WTC11 (cell line): ENCODE measurements at regions of chr3 and their contacts with region 1.

Region 1: DNA sequence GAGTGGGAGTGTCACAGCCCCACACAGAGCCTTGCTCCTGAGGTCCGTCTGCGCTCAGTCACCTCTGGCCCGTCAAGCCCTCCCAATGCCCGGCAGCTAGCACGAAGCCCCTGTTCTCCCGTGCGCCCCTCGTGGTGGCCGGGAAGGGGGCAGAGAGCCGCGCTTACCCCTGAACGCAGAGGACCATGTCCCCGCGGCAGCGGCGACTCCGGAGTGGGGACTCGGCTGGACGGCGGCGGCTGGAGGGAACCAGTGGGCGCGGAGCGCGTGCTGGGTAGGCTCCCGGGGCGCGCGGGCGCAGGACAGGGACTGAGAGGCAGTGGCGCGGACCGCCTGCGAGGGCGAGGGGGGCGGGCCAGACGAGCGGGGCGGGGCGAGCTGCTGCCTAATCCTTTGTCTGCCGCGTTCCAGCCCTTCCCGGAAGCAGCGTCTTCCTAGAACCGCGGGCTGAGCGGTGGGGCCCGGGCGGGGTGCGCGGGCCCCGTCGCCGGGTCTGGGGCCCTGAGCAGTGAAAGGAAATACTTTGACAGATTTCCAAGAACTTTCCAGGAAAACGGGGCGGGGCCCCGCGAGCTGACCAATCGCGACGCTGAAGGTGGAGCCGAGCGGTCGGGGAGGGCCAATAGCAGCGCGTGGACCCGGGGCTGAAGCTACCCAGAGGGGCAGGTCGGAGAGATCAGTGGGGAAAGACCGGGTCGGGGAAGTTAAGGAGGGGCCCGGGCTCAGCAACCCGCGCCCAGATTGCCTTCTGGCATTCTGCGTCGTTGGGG is at the start of gene CISH:
- DNase-seq: peak; percentile 94
- ATAC-seq: peak; percentile 81
- H3K4me3 Mint-ChIP-seq: peak within 1 kb of the TSS; percentile 76
- H3K27ac Mint-ChIP-seq: no peak within 1 kb of the TSS
- H3K4me1 Mint-ChIP-seq: peaks cover 24% of the 10 kb centered on the region
- H3K27me3 Mint-ChIP-seq: peaks cover 51% of the 10 kb centered on the region
- CTCF ChIP-seq: peak; percentile 46; the same call in 1 of the 2 replicates
- total RNA-seq, gene CISH: 1.8 to 2.4 TPM (median 1.9 TPM) in 3 replicates

Region 2: GRCh38 chr3:50423543-50423942 is 188.1 kb before region 1 on chr3:
- CTCF ChIA-PET with region 1: no interaction called
- POLR2A ChIA-PET with region 1: no interaction called
- DNase-seq: no peak
- ATAC-seq: no peak
- H3K4me3 Mint-ChIP-seq: no peak overlapping the region
- H3K27ac Mint-ChIP-seq: no peak overlapping the region
- H3K4me1 Mint-ChIP-seq: peaks cover 5% of the 10 kb centered on the region
- H3K27me3 Mint-ChIP-seq: no peaks in the 10 kb centered on the region
- CTCF ChIP-seq: no peak

Region 3: DNA sequence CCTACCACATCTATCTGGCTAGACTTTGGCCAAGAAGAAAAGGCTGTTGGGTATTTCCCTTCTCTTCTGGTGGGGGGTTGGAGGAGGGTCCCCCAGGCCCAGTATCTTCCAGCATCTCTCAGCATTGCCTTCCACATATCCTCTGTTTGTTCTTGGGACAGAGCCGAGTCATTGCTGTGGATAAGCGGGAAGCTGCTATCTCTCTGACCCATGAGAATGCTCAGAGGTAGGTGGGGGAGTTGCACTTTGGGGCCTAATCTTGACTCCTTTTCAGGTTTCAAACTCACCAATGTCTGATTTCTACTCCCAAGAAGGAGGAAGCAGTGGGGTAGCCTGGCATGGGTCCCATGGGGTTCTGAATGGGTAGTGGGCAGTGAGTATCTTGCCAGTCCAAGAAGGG is 34.3 kb before region 1 on chr3:
- CTCF ChIA-PET with region 1: interaction called, 98 read pairs
- POLR2A ChIA-PET with region 1: no interaction called
- DNase-seq: no peak
- ATAC-seq: no peak
- H3K4me3 Mint-ChIP-seq: no peak overlapping the region
- H3K27ac Mint-ChIP-seq: no peak overlapping the region
- H3K4me1 Mint-ChIP-seq: no peaks in the 10 kb centered on the region
- H3K27me3 Mint-ChIP-seq: no peaks in the 10 kb centered on the region
- CTCF ChIP-seq: no peak

Region 4: GRCh38 chr3:50627407-50628051 is 15.9 kb after region 1 on chr3:
- CTCF ChIA-PET with region 1: interaction called, 55 read pairs
- POLR2A ChIA-PET with region 1: no interaction called
- DNase-seq: peak; percentile 66
- ATAC-seq: peak; percentile 93
- H3K4me3 Mint-ChIP-seq: no peak overlapping the region
- H3K27ac Mint-ChIP-seq: no peak overlapping the region
- H3K4me1 Mint-ChIP-seq: peaks cover 38% of the 10 kb centered on the region
- H3K27me3 Mint-ChIP-seq: no peaks in the 10 kb centered on the region
- CTCF ChIP-seq: no peak

Region 5: DNA sequence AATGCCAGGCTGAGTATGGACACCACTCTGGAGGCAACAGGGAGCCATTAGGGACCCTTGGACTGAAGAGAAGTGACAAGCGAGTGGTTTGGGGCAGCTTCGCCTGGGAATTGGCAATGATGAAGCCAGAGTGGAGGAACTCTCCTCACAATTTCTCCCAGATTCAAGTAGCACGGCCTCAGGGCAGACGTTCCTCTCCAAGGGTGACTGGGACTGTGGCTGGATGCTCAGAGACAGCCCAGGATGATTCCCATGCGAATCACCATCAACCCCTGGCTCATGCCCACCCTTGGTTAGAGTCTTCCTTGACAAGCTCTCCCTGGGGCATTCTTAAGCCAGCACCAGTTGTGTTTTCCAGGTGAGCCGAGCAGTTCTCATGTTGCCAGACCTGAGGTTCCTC is 46.8 kb after region 1 on chr3:
- CTCF ChIA-PET with region 1: interaction called, 202 read pairs
- POLR2A ChIA-PET with region 1: interaction called, 8 read pairs
- DNase-seq: no peak
- ATAC-seq: no peak
- H3K4me3 Mint-ChIP-seq: no peak overlapping the region
- H3K27ac Mint-ChIP-seq: no peak overlapping the region
- H3K4me1 Mint-ChIP-seq: no peaks in the 10 kb centered on the region
- H3K27me3 Mint-ChIP-seq: peaks cover 3% of the 10 kb centered on the region; the same call in 1 of the 2 replicates
- CTCF ChIP-seq: no peak

Region 6: DNA sequence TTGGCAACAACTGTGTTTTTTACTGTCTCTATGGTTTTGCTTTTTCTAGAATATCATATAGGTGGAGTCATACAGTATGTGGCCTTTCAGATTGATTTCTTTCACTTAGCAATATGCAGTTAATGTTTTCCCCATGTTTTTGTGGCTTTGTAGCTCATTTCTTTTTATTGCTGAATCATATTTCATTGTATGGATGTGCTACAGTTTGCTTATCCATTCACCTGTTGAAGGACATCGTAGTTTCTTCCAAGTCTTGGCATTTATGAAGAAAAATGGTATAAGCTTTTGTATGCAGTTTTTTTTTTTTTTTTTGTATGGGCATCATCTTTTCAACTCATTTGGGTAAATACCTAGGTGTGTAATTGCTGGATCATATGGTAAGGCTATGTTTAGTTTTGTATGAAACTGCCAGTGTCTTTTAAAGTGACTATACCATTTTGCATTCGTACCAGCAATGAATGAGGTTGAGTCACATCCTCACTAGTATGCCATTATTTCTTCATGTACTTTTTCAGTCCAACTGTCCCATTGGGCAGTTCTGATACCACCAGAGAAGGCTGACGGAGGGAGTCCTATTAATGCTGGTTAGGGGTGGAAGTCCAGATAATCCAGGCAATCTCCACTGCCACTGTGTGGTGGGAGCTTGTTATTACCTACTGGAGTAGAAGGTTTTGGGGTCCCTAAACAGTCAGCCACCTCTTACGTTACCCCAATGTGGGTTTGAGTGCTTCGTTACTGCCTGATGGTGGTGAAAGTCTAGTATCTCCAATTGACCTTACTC is 273.6 kb after region 1 on chr3:
- CTCF ChIA-PET with region 1: interaction called, 14 read pairs
- POLR2A ChIA-PET with region 1: no interaction called
- DNase-seq: peak; percentile 57
- ATAC-seq: peak; percentile 96
- H3K4me3 Mint-ChIP-seq: no peak overlapping the region
- H3K27ac Mint-ChIP-seq: no peak overlapping the region
- H3K4me1 Mint-ChIP-seq: peaks cover 13% of the 10 kb centered on the region
- H3K27me3 Mint-ChIP-seq: no peaks in the 10 kb centered on the region
- CTCF ChIP-seq: peak; percentile 24; the same call in 1 of the 2 replicates

Region 7: DNA sequence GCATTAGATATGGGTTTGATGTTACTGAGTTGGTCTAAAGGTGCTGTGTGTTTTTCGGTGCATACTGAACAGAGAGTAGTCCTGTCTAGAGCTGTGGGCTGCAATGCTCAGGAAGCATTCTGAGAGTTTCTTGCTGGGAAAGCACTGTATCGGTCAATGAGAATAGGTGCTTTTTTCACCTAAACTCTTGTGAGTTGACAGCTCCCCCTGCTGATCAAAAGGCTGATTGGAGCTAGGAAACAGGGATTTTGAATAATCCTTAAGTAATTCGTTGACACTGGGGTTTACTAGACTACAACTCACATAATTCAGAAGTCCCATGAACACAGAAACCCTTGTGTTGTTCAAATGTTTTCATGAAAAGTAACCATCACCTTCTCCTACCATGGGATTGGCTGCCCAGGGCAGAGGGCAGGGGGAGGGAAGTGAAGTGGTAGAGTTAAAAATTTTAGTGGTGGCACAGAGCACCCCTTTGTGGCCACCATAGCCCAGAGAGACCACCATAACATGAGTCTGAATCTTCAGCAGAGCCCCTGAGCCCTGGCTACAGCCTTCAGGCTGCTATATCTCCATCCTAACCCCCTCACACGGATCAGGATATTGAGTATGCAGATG is 760.4 kb after region 1 on chr3:
- CTCF ChIA-PET with region 1: interaction called, 35 read pairs
- POLR2A ChIA-PET with region 1: no interaction called
- DNase-seq: peak; percentile 67
- ATAC-seq: peak; percentile 89
- H3K4me3 Mint-ChIP-seq: no peak overlapping the region
- H3K27ac Mint-ChIP-seq: no peak overlapping the region
- H3K4me1 Mint-ChIP-seq: no peaks in the 10 kb centered on the region
- H3K27me3 Mint-ChIP-seq: no peaks in the 10 kb centered on the region
- CTCF ChIP-seq: peak; percentile 25; the same call in 1 of the 2 replicates